SK-N-SH (cell line): ENCODE measurements at regions of chr11 and their contacts with region 1.

Region 1: DNA sequence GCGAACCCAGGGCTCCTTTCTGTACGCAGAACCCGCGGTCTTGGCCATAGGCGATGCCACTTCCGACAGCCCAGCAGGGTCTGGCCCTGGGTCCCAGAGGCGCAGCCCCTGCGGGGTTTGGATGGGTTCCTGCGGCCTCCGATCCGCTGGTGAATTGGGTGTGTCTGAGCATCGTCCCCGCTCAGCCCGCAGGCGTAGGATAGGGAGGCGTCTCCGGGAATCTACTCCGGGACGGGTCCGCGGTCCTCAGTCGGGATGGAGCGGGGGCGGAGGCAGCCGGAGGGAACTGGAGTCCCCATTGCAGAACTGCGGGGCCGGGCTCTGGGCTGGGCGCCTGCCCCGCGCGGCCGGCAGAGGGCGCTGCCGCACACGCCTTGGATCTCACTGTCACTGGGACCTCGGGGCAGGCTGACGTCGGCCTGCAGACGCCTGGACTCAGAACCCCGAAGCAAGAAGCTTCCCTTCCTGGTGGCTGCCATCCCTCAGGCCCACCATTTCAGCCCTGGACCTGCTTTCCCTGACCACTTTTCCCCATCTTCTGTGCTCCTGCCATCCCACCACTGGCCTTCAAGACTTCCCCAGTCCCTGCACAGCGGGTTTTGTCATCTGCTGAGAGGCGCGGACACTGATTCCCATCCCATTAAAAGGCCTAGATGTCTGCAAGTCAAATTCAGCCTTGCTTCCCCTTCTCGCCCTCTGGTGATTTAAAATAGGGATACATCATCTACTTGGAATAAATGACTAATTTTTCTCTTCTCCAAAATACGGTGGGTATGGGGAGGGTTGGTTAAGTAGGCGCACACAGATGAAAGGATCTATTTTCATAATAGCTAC is 38.3 kb upstream of the CREB3L1 start:
- DNase-seq: peak; percentile 94
- H3K4me3 ChIP-seq: peak overlapping the region; percentile 53 to 71
- H3K27ac ChIP-seq: peak overlapping the region in 1 of 2 experiments; percentile 81; a peak in 3 of 4 replicates
- H3K4me1 ChIP-seq: peaks cover 22 to 38% of the 10 kb centered on the region in 2 experiments
- H3K27me3 ChIP-seq: no peaks in the 10 kb centered on the region
- CTCF ChIP-seq: peak; percentile 91
- EP300 ChIP-seq: no peak
- RAD21 ChIP-seq: peak; percentile 92

Region 2: GRCh38 chr11:45964911-45965389 is 274.2 kb before region 1 on chr11:
- CTCF ChIA-PET with region 1: interaction called, 12 read pairs
- POLR2A ChIA-PET with region 1: no interaction called
- DNase-seq: peak; percentile 81
- H3K4me3 ChIP-seq: no peak overlapping the region; a peak in 1 of 4 replicates
- H3K27ac ChIP-seq: peak overlapping the region in 1 of 2 experiments; percentile 2; a peak in 1 of 4 replicates
- H3K4me1 ChIP-seq: no peaks in the 10 kb centered on the region; a peak in 1 of 4 replicates
- H3K27me3 ChIP-seq: no peaks in the 10 kb centered on the region
- CTCF ChIP-seq: peak; percentile 96
- EP300 ChIP-seq: no peak
- RAD21 ChIP-seq: peak; percentile 91

Region 3: GRCh38 chr11:46222490-46223251 is 16.5 kb before region 1 on chr11:
- CTCF ChIA-PET with region 1: interaction called, 14 read pairs
- POLR2A ChIA-PET with region 1: no interaction called
- DNase-seq: no peak
- H3K4me3 ChIP-seq: no peak overlapping the region
- H3K27ac ChIP-seq: no peak overlapping the region
- H3K4me1 ChIP-seq: no peaks in the 10 kb centered on the region
- H3K27me3 ChIP-seq: no peaks in the 10 kb centered on the region
- CTCF ChIP-seq: peak; percentile 15; the same call in 1 of the 2 replicates
- EP300 ChIP-seq: no peak
- RAD21 ChIP-seq: no peak

Region 4: DNA sequence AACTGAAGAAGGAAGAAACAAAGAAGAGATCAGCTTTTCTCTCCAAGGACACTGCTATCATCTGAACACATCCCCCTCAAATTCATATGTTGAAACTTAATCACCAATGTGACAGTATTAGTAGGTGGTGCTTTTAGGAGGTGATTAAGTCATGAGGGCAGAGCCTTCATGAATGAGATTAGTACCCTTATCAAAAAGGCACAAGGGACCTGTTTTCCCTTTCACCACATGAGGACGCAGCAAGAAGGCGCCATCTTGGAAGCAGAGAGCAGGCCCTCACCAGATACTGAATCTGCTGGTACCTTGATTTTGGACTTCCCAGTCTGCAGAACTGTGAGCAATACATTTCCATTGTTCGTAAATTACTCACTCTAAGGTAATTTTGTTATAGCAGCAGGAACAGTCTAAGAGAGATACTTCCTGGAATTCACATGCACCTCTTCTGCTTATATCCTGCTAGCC is 17.4 kb after region 1 on chr11:
- CTCF ChIA-PET with region 1: interaction called, 10 read pairs
- POLR2A ChIA-PET with region 1: no interaction called
- DNase-seq: no peak
- H3K4me3 ChIP-seq: no peak overlapping the region
- H3K27ac ChIP-seq: no peak overlapping the region
- H3K4me1 ChIP-seq: peaks cover 0 to 5% of the 10 kb centered on the region in 2 experiments; a peak in 1 of 4 replicates
- H3K27me3 ChIP-seq: no peaks in the 10 kb centered on the region
- CTCF ChIP-seq: no peak
- EP300 ChIP-seq: no peak
- RAD21 ChIP-seq: no peak

Region 5: GRCh38 chr11:46278387-46279125 is 39.4 kb after region 1 on chr11:
- CTCF ChIA-PET with region 1: interaction called, 36 read pairs
- POLR2A ChIA-PET with region 1: interaction called, 8 read pairs
- DNase-seq: peak; percentile 77
- H3K4me3 ChIP-seq: peak overlapping the region; percentile 76 to 87
- H3K27ac ChIP-seq: peak overlapping the region; percentile 8 to 84; a peak in 3 of 4 replicates
- H3K4me1 ChIP-seq: peaks cover 26 to 33% of the 10 kb centered on the region in 2 experiments
- H3K27me3 ChIP-seq: no peaks in the 10 kb centered on the region
- CTCF ChIP-seq: peak; percentile 84
- EP300 ChIP-seq: no peak
- RAD21 ChIP-seq: peak; percentile 26; the same call in 1 of the 2 replicates

Region 6: DNA sequence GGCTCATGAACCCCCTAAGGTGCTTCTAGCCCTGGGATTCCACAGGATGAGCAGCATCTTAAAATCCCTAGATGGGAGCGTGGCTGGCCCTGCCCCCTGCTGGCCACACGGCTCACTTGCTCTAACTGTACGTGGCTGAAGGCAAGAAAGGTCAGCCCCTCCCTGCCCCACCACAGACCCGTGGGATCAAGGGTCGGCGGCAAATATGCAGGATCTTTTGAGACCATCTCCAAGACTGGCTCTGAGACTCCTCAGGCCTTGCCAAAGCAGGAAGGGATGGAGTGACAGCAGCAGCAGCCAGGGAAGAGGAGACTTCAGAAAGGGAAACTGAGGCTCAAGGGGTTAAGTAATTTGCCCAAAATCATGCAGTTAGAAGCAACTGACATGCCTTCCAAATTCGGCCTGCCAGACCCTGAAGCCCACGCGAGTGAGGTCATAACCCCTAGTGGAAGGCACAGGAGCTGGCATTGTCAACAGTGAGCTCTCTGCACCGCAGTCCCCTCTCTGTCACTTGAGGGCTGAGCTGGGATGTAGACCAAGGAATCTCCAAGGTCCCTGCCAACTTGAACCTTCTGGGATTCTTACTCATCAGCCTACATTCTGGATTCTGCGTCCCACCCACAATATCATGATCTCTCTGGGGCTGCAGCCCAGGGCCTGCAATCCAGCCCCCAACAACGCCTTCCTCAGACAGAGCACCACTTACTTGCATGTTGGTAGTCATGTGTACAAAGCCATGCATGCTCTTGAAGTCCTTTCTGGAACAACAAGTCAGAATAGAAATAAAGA is 69.6 kb after region 1 on chr11:
- CTCF ChIA-PET with region 1: interaction called, 459 read pairs
- POLR2A ChIA-PET with region 1: interaction called, 14 read pairs
- DNase-seq: peak; percentile 92
- H3K4me3 ChIP-seq: peak overlapping the region in 1 of 2 experiments; percentile 35; a peak in 1 of 4 replicates
- H3K27ac ChIP-seq: 0 out of 4 replicates have a peak overlapping the region, but pooled peaks of 1 of the 2 experiments have one; percentile 15
- H3K4me1 ChIP-seq: peaks cover 0 to 2% of the 10 kb centered on the region in 2 experiments; a peak in 1 of 4 replicates
- H3K27me3 ChIP-seq: no peaks in the 10 kb centered on the region
- CTCF ChIP-seq: peak; percentile 93
- EP300 ChIP-seq: no peak
- RAD21 ChIP-seq: peak; percentile 89

Region 7: DNA sequence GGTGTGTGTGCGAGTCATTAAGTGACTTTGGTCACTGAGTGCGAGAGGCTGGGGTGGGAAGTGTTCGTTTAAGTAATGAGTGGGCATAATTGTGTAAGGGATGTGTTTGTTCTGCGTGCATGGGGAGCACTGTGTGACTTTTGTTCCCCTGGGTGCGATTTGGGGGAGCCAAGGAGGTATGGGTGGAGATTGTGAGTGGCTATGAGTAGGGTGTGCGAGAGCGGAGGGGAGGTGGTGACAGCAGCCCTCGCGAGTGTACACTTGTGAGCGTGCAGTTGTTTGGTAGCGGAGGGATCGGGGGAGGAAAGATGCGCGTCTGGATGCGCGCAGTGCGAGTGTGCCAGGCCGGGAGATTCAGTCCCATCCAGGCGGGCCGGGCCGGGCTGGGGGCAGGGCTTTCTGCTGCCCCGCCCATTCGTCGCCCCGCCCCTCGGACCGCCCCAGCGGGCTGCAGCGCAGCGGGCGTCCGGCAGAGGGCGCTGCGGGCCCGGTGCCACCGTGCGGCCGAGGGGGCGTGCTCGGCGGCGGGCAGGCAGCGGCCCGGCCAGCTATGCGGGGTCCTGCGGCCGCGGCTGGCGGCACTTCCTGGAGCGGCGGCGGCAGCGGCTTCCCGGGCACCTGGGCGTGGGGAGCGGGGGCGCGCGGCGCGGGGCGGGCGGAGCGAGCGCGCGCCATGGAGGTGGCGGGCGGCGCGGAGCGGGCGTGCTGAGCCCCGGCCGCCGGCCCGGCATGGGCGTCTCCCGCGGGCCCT is 107.9 kb after region 1 on chr11 and contains the start of gene DGKZ:
- CTCF ChIA-PET with region 1: interaction called, 27 read pairs
- POLR2A ChIA-PET with region 1: interaction called, 6 read pairs
- DNase-seq: peak; percentile 100
- H3K4me3 ChIP-seq: peak within 1 kb of the TSS; percentile 82 to 86
- H3K27ac ChIP-seq: peak within 1 kb of the TSS in 1 of 2 experiments; percentile 5; a peak in 1 of 4 replicates
- H3K4me1 ChIP-seq: peaks cover 19 to 22% of the 10 kb centered on the region in 2 experiments; a peak in 3 of 4 replicates
- H3K27me3 ChIP-seq: no peaks in the 10 kb centered on the region
- CTCF ChIP-seq: peak; percentile 53
- EP300 ChIP-seq: no peak
- RAD21 ChIP-seq: peak; percentile 56; the same call in 1 of the 2 replicates
- polyA plus RNA-seq, gene DGKZ: 23.9 and 33.2 TPM in 2 replicates